ENCODE measurements at regions of chr1 and their contacts with region 1.

Region 1: DNA sequence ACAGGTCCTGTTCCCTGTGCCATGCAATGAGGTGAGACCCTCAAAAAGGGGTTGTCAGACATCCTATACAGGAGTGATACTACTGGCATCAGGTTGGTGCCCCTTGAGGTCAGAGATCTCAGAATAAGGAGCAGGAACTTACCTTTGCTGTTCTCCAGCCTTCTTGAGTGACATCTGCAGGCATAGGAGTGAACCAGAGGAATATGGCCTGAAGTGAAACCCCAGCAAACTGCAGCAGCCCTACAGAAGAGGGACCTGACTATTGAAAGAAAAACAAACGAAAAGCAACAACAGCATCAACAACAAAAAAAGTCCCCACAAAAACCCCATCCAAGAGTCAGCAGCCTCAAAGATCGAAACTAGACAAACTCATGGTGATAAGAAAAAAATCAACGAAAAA is 74.5 kb downstream of the CHD1L start:
- DNase-seq: no peak
- ATAC-seq: no peak
- H3K4me3 ChIP-seq: no peak overlapping the region
- H3K27ac ChIP-seq: no peak overlapping the region
- H3K4me1 ChIP-seq: no peaks in the 10 kb centered on the region
- H3K27me3 ChIP-seq: no peaks in the 10 kb centered on the region

Region 2: DNA sequence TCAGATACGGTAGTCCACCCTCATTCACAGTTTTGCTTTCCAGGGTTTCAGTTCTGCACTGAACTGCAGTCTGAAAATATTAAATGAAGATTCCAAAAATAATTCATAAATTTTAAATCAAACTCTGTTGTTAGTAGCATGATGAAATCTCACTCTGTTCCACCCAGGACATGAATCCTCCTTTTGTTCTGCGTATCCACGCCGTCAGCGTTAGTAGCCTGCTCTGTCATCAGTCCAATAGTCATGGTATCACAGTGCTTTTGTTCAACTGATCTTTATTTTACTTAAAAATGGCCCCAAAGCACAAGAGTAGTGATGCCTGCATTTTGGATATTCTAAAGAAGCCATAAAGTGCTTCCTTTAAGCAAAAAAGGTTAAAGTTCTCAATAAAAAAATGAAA is 50.6 kb before region 1 on chr1:
- intact Hi-C with region 1: loop called in 1 of 4 experiments (anchors 5 kb)
- DNase-seq: no peak
- ATAC-seq: no peak
- H3K4me3 ChIP-seq: no peak overlapping the region
- H3K27ac ChIP-seq: no peak overlapping the region
- H3K4me1 ChIP-seq: no peaks in the 10 kb centered on the region
- H3K27me3 ChIP-seq: no peaks in the 10 kb centered on the region

Region 3: GRCh38 chr1:147409886-147410285 is 92.9 kb after region 1 on chr1:
- intact Hi-C with region 1: no loop called
- DNase-seq: no peak
- ATAC-seq: no peak
- H3K4me3 ChIP-seq: no peak overlapping the region
- H3K27ac ChIP-seq: no peak overlapping the region
- H3K4me1 ChIP-seq: no peaks in the 10 kb centered on the region
- H3K27me3 ChIP-seq: no peaks in the 10 kb centered on the region